ENCODE measurements at regions of chr5 and their contacts with region 1.

Region 1: GRCh38 chr5:3715062-3715461 is 119.4 kb downstream of the IRX1 start:
- DNase-seq: no peak
- H3K4me3 ChIP-seq: no peak overlapping the region
- H3K27ac ChIP-seq: no peak overlapping the region
- H3K4me1 ChIP-seq: no peaks in the 10 kb centered on the region
- H3K27me3 ChIP-seq: no peaks in the 10 kb centered on the region
- CTCF ChIP-seq: no peak
- POLR2A ChIP-seq: no peak

Region 2: GRCh38 chr5:3214838-3215374 is 500.2 kb before region 1 on chr5:
- intact Hi-C with region 1: no loop called
- DNase-seq: no peak
- H3K4me3 ChIP-seq: no peak overlapping the region
- H3K27ac ChIP-seq: no peak overlapping the region
- H3K4me1 ChIP-seq: no peaks in the 10 kb centered on the region
- H3K27me3 ChIP-seq: no peaks in the 10 kb centered on the region
- CTCF ChIP-seq: no peak
- POLR2A ChIP-seq: no peak

Region 3: GRCh38 chr5:4720831-4721230 is 1005.8 kb after region 1 on chr5:
- intact Hi-C with region 1: loop called (anchors 10 kb)
- DNase-seq: no peak
- H3K4me3 ChIP-seq: no peak overlapping the region
- H3K27ac ChIP-seq: no peak overlapping the region
- H3K4me1 ChIP-seq: no peaks in the 10 kb centered on the region
- H3K27me3 ChIP-seq: no peaks in the 10 kb centered on the region
- CTCF ChIP-seq: no peak
- POLR2A ChIP-seq: no peak

Measured in breast epithelium (tissue), 4 donors.